Activated B cell treated with CpG ODN at 0.5 μM for 24 hours (primary cell): ENCODE measurements at regions of chr6 and their contacts with region 1.

Region 1: DNA sequence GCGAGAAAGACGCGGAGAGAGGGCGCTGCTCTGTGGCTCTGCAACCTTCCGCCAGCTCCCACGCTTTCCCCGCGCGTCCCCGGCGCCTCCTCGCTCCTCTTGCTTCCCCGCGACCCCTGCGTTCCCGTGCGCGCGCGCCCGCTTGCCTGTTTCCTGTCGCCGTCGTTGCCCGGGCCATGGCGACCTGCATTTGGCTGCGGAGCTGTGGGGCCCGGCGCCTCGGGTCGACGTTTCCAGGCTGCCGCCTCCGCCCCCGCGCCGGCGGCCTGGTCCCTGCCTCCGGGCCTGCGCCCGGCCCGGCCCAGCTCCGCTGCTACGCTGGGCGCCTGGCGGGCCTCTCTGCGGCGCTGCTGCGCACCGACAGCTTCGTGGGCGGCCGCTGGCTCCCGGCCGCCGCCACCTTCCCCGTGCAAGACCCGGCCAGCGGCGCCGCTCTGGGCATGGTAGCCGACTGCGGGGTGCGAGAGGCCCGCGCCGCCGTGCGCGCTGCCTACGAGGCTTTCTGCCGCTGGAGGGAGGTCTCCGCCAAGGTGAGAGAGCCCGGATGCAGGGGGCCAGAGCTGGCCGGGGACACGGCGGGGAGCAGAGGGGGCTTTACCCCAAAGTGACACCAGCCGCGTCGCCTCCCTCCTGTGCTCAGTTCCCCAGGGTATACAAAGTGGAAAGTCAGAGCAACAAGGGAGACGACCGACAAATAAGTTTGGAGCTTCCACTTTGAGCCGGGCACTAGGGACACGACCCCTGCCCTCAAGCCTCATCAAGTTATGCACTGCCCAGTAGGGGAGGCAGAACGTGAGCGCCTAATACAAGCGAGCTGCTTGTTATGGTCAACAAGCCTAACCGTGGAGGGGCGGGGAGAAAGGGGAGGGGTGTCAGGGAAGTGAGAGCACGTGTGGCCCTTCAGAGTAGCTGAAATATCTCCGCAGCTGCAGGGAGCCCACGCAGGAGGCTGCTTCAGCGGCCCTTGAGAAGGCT is at the start of gene ALDH5A1:
- DNase-seq: peak; percentile 75
- ATAC-seq: peak; percentile 75
- H3K4me3 Mint-ChIP-seq: peak within 1 kb of the TSS; percentile 86
- H3K27ac Mint-ChIP-seq: peak within 1 kb of the TSS; percentile 89
- H3K4me1 Mint-ChIP-seq: peaks cover 33% of the 10 kb centered on the region
- H3K27me3 Mint-ChIP-seq: no peaks in the 10 kb centered on the region
- CTCF ChIP-seq: peak; percentile 29
- total RNA-seq, gene ALDH5A1: 15.9 and 17.5 TPM in 2 replicates

Region 2: DNA sequence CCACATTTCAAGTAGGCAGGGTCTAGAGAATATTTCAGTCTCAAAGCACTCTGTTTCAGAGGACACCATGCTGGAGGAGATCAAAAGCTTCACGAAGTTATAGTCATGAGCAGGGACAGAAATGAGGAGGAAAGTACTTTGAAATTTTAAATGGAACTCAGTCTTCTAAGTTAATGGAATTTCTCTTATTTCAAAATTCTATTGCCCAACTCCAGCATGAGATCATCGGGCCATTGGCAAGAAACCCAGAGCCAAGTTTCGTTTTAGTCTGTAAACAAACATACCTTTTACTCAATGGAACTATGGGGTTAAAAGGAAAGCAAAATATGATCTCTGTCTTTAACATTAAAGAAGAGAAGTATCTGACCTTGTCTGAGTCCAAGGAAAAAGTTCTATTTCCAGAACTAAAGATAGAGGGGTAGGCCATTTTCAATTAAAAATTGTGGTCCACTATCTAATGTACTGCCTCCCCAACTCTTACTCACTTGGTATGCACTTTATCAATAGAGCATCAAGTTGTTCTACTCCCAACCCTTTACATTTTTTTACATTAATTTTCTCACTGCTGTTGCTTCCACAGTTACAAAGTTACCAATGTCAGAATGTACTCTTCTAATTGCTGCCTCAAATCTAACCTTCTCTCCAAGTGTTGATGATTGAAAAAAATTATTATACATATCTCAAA is 604.4 kb before region 1 on chr6:
- CTCF ChIA-PET with region 1: no interaction called
- POLR2A ChIA-PET with region 1: no interaction called
- intact Hi-C with region 1: no loop called
- DNase-seq: no peak
- ATAC-seq: no peak
- H3K4me3 Mint-ChIP-seq: no peak overlapping the region
- H3K27ac Mint-ChIP-seq: no peak overlapping the region
- H3K4me1 Mint-ChIP-seq: no peaks in the 10 kb centered on the region
- H3K27me3 Mint-ChIP-seq: no peaks in the 10 kb centered on the region
- CTCF ChIP-seq: no peak

Region 3: GRCh38 chr6:24359640-24360454 is 135.3 kb before region 1 on chr6:
- CTCF ChIA-PET with region 1: no interaction called
- POLR2A ChIA-PET with region 1: no interaction called
- intact Hi-C with region 1: no loop called
- DNase-seq: peak; percentile 69
- ATAC-seq: peak; percentile 93
- H3K4me3 Mint-ChIP-seq: peak overlapping the region; percentile 77
- H3K27ac Mint-ChIP-seq: peak overlapping the region; percentile 79
- H3K4me1 Mint-ChIP-seq: peaks cover 20% of the 10 kb centered on the region
- H3K27me3 Mint-ChIP-seq: peaks cover 15% of the 10 kb centered on the region
- CTCF ChIP-seq: peak; percentile 62

Region 4: DNA sequence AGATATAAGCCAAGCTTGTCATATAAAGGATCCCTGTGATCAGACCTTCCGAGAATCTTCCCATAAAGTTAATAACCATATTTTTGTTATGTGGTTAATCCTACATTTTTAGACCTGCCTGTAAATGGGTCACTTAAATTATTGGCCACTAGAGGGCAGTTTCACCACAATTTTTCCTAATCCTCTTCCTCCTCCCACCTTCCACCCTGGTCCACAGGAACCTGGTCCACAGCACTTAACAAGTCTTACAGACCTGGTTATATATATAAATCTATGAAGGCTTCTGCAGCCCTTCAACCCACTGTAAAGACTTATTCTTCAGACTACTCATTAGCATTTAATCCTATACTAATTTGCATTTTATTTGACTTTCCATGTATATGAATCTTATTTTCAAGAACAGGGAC is 64.1 kb before region 1 on chr6:
- CTCF ChIA-PET with region 1: interaction called, 6 read pairs
- POLR2A ChIA-PET with region 1: no interaction called
- intact Hi-C with region 1: loop called (anchors 5 kb)
- DNase-seq: no peak
- ATAC-seq: peak; percentile 42
- H3K4me3 Mint-ChIP-seq: no peak overlapping the region
- H3K27ac Mint-ChIP-seq: no peak overlapping the region
- H3K4me1 Mint-ChIP-seq: no peaks in the 10 kb centered on the region
- H3K27me3 Mint-ChIP-seq: no peaks in the 10 kb centered on the region
- CTCF ChIP-seq: peak; percentile 52

Region 5: GRCh38 chr6:24520929-24521546 is 25.9 kb after region 1 on chr6:
- CTCF ChIA-PET with region 1: interaction called, 60 read pairs
- POLR2A ChIA-PET with region 1: interaction called, 67 read pairs
- intact Hi-C with region 1: loop called (anchors 1 kb)
- DNase-seq: peak; percentile 35
- ATAC-seq: peak; percentile 40
- H3K4me3 Mint-ChIP-seq: peak overlapping the region; percentile 42
- H3K27ac Mint-ChIP-seq: peak overlapping the region; percentile 88
- H3K4me1 Mint-ChIP-seq: peaks cover 62% of the 10 kb centered on the region
- H3K27me3 Mint-ChIP-seq: no peaks in the 10 kb centered on the region
- CTCF ChIP-seq: no peak

Region 6: GRCh38 chr6:24646782-24647181 is 151.7 kb after region 1 on chr6:
- CTCF ChIA-PET with region 1: interaction called, 5 read pairs
- POLR2A ChIA-PET with region 1: interaction called, 5 read pairs
- intact Hi-C with region 1: loop called (anchors 2 kb)
- DNase-seq: no peak
- ATAC-seq: no peak
- H3K4me3 Mint-ChIP-seq: peak overlapping the region; percentile 89
- H3K27ac Mint-ChIP-seq: peak overlapping the region; percentile 91
- H3K4me1 Mint-ChIP-seq: peaks cover 28% of the 10 kb centered on the region
- H3K27me3 Mint-ChIP-seq: no peaks in the 10 kb centered on the region
- CTCF ChIP-seq: no peak

Region 7: DNA sequence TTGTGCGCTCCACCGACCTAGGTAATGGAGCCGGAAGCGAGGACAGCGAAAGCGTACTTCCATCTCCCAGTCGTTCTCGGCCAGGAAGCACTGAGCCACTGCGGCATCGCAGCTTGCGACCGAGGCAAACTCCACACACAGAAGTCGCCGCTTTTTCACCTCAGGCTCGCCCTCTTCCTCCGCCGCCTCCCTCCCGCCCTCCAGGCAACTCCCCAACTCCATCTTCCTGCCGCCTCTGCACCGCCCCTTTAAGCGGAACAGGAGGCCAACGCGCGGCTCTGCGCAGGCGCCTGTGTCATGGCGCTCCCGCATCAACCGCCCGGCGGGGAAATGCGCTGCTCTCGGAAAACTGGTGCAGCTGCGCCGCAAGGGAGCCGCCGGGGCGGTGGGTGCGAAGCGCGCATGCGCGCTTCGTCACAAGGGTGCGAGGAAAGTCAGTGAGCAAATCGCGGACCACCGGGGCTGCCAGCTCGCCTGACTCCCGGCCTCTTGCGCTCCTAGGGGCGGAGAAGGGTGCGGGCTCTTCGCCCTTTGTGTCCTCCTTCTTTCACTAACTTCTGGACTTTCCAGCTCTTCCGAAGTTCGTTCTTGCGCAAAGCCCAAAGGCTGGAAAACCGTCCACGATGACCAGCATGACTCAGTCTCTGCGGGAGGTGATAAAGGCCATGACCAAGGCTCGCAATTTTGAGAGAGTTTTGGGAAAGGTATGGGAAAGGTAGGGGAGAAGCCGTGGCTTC is 171.7 kb after region 1 on chr6 and contains the starts of genes ACOT13 and TDP2:
- CTCF ChIA-PET with region 1: interaction called, 10 read pairs
- POLR2A ChIA-PET with region 1: interaction called, 19 read pairs
- intact Hi-C with region 1: loop called (anchors 1 kb)
- DNase-seq: peak; percentile 92
- ATAC-seq: peak; percentile 94
- H3K4me3 Mint-ChIP-seq: peak within 1 kb of the TSS; percentile 99
- H3K27ac Mint-ChIP-seq: peak within 1 kb of the TSS; percentile 96
- H3K4me1 Mint-ChIP-seq: peaks cover 46% of the 10 kb centered on the region
- H3K27me3 Mint-ChIP-seq: no peaks in the 10 kb centered on the region
- CTCF ChIP-seq: no peak
- total RNA-seq, gene ACOT13: 12.0 and 13.8 TPM in 2 replicates
- total RNA-seq, gene TDP2: 48.9 and 51.1 TPM in 2 replicates

Region 8: GRCh38 chr6:24689964-24690363 is 194.9 kb after region 1 on chr6:
- CTCF ChIA-PET with region 1: interaction called, 5 read pairs
- POLR2A ChIA-PET with region 1: no interaction called
- intact Hi-C with region 1: loop called (anchors 1 kb)
- DNase-seq: no peak
- ATAC-seq: no peak
- H3K4me3 Mint-ChIP-seq: no peak overlapping the region
- H3K27ac Mint-ChIP-seq: no peak overlapping the region
- H3K4me1 Mint-ChIP-seq: no peaks in the 10 kb centered on the region
- H3K27me3 Mint-ChIP-seq: no peaks in the 10 kb centered on the region
- CTCF ChIP-seq: no peak

Region 9: GRCh38 chr6:24774696-24775519 is 279.8 kb after region 1 on chr6 and contains the start of gene GMNN:
- CTCF ChIA-PET with region 1: no interaction called
- POLR2A ChIA-PET with region 1: interaction called, 5 read pairs
- intact Hi-C with region 1: loop called (anchors 10 kb)
- DNase-seq: peak; percentile 99
- ATAC-seq: peak; percentile 90
- H3K4me3 Mint-ChIP-seq: peak within 1 kb of the TSS; percentile 97
- H3K27ac Mint-ChIP-seq: peak within 1 kb of the TSS; percentile 92
- H3K4me1 Mint-ChIP-seq: peaks cover 22% of the 10 kb centered on the region
- H3K27me3 Mint-ChIP-seq: no peaks in the 10 kb centered on the region
- CTCF ChIP-seq: no peak
- total RNA-seq, gene GMNN: 12.9 and 14.5 TPM in 2 replicates